A549 (cell line): ENCODE measurements at regions of chr2 and their contacts with region 1.

Region 1: DNA sequence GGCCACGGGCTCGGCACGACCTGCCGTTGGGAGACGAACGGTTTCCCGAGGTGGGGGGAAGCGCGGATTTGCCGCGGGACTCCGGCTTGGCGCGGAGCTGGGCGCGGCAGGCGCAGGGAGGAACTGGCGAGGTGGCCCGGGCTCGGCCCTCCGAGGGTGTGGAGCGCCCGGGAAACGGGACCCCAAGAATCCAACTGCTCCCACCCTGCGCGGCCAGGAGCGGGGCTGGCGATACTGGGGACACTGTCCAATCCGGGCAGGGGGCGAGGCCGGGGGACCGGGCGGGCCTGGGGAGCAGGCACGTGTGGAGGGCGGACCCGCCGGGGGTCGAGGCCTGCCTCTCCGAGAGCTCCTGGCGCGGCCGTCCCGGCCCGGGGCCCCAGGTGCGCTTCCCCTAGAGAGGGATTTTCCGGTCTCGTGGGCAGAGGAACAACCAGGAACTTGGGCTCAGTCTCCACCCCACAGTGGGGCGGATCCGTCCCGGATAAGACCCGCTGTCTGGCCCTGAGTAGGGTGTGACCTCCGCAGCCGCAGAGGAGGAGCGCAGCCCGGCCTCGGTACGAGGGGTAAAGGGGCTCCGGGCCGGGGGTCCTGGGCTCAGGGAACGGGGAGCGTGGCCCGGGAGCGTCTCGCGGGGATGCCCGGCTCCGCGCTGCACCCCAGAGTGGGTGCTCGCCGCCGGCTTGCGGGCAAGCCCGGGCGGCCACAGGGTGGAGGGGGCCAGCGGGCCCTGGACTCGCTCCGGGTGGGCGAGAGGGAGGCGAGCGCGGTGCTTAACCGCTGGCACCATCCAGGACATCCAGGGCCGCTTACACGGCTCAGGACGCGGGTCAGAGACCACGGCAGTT is at the start of gene ANXA4:
- DNase-seq: peak; percentile 91 to 93
- ATAC-seq: peak; percentile 88 to 94
- H3K4me3 ChIP-seq: peak within 1 kb of the TSS; percentile 76
- H3K27ac ChIP-seq: peak within 1 kb of the TSS; percentile 90 to 99
- H3K4me1 ChIP-seq: peaks cover 58% of the 10 kb centered on the region
- CTCF ChIP-seq: no peak
- EP300 ChIP-seq: peak in 1 of 2 experiments; percentile 17; a peak in 1 of 5 replicates
- POLR2A ChIP-seq: peak; percentile 89
- RAD21 ChIP-seq: peak in 1 of 2 experiments; percentile 19; a peak in 3 of 5 replicates
- polyA plus RNA-seq, gene ANXA4: 341 and 360 TPM in 2 replicates

Region 2: DNA sequence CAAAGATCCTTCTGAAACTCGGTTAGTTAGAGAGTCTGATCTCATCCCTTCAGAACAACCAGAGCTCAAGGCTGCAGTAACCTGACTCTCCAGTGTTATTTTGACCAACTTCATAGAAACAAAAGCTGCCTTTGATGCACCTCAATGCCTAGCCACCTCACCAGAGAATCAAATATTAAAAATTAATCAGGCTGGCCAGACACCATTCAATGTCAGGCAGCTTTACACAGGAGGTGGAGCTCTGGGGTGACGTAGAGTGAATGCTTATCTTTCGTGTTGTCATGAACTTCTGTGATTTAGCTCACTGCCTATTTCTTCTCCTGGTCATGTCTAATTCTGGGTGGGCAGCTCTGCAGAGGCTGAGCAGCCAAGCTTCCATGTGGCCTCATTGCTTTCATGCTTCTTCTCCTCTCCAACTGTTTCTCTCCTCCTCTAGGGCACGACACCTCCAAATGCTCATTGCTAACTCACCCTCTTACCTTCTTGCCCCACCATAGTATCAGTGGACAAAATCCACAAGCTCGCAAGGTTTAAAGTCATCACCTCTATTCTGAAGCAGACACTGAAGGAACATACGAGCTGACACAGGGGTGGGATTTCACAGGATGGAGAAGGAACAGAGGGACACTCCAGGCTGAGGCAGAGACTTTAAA is 137.7 kb before region 1 on chr2:
- CTCF ChIA-PET with region 1: no interaction called
- POLR2A ChIA-PET with region 1: no interaction called
- DNase-seq: no peak
- ATAC-seq: no peak
- H3K4me3 ChIP-seq: no peak overlapping the region
- H3K27ac ChIP-seq: no peak overlapping the region
- H3K4me1 ChIP-seq: peaks cover 21% of the 10 kb centered on the region
- CTCF ChIP-seq: no peak
- EP300 ChIP-seq: no peak
- POLR2A ChIP-seq: no peak
- RAD21 ChIP-seq: no peak

Region 3: GRCh38 chr2:69628325-69629021 is 113.4 kb before region 1 on chr2:
- CTCF ChIA-PET with region 1: no interaction called
- POLR2A ChIA-PET with region 1: no interaction called
- DNase-seq: no peak
- ATAC-seq: no peak
- H3K4me3 ChIP-seq: no peak overlapping the region
- H3K27ac ChIP-seq: no peak overlapping the region
- H3K4me1 ChIP-seq: peaks cover 13% of the 10 kb centered on the region; the same call in 2 of the 3 replicates
- CTCF ChIP-seq: no peak
- EP300 ChIP-seq: no peak
- POLR2A ChIP-seq: no peak
- RAD21 ChIP-seq: no peak

Region 4: GRCh38 chr2:69694894-69695849 is 46.7 kb before region 1 on chr2:
- CTCF ChIA-PET with region 1: no interaction called
- POLR2A ChIA-PET with region 1: no interaction called
- DNase-seq: peak in 1 of 2 experiments; percentile 78
- ATAC-seq: peak; percentile 79 to 90
- H3K4me3 ChIP-seq: peak overlapping the region; percentile 20
- H3K27ac ChIP-seq: peak overlapping the region; percentile 53 to 76; a peak in 5 of 6 replicates
- H3K4me1 ChIP-seq: peaks cover 46% of the 10 kb centered on the region
- CTCF ChIP-seq: no peak
- EP300 ChIP-seq: no peak; a peak in 1 of 5 replicates
- POLR2A ChIP-seq: no peak
- RAD21 ChIP-seq: no peak; a peak in 2 of 5 replicates

Region 5: GRCh38 chr2:69762513-69763497 is 21.0 kb after region 1 on chr2:
- CTCF ChIA-PET with region 1: interaction called, 6 read pairs
- POLR2A ChIA-PET with region 1: interaction called, 11 read pairs
- DNase-seq: no peak
- ATAC-seq: no peak; a peak in 1 of 6 replicates
- H3K4me3 ChIP-seq: no peak overlapping the region
- H3K27ac ChIP-seq: peak overlapping the region; percentile 22 to 62; a peak in 5 of 6 replicates
- H3K4me1 ChIP-seq: peaks cover 88% of the 10 kb centered on the region
- CTCF ChIP-seq: no peak
- EP300 ChIP-seq: no peak
- POLR2A ChIP-seq: no peak
- RAD21 ChIP-seq: no peak

Region 6: GRCh38 chr2:69781321-69782248 is 39.7 kb after region 1 on chr2:
- CTCF ChIA-PET with region 1: interaction called, 4 read pairs
- POLR2A ChIA-PET with region 1: interaction called, 34 read pairs
- DNase-seq: peak; percentile 67 to 91
- ATAC-seq: peak; percentile 58 to 65
- H3K4me3 ChIP-seq: peak overlapping the region; percentile 7; the same call in 1 of the 3 replicates
- H3K27ac ChIP-seq: peak overlapping the region; percentile 90 to 93
- H3K4me1 ChIP-seq: peaks cover 91% of the 10 kb centered on the region
- CTCF ChIP-seq: no peak
- EP300 ChIP-seq: peak; percentile 96 to 98
- POLR2A ChIP-seq: no peak
- RAD21 ChIP-seq: peak in 1 of 2 experiments; percentile 50; a peak in 2 of 5 replicates

Region 7: GRCh38 chr2:69798909-69799526 is 57.2 kb after region 1 on chr2:
- CTCF ChIA-PET with region 1: interaction called, 10 read pairs
- POLR2A ChIA-PET with region 1: interaction called, 3 read pairs
- DNase-seq: no peak
- ATAC-seq: peak in 1 of 2 experiments; percentile 20; a peak in 3 of 6 replicates
- H3K4me3 ChIP-seq: no peak overlapping the region
- H3K27ac ChIP-seq: peak overlapping the region; percentile 44 to 76
- H3K4me1 ChIP-seq: peaks cover 48% of the 10 kb centered on the region
- CTCF ChIP-seq: no peak
- EP300 ChIP-seq: no peak
- POLR2A ChIP-seq: no peak
- RAD21 ChIP-seq: no peak